ENCODE measurements at regions of chr5 and their contacts with region 1.

Region 1: DNA sequence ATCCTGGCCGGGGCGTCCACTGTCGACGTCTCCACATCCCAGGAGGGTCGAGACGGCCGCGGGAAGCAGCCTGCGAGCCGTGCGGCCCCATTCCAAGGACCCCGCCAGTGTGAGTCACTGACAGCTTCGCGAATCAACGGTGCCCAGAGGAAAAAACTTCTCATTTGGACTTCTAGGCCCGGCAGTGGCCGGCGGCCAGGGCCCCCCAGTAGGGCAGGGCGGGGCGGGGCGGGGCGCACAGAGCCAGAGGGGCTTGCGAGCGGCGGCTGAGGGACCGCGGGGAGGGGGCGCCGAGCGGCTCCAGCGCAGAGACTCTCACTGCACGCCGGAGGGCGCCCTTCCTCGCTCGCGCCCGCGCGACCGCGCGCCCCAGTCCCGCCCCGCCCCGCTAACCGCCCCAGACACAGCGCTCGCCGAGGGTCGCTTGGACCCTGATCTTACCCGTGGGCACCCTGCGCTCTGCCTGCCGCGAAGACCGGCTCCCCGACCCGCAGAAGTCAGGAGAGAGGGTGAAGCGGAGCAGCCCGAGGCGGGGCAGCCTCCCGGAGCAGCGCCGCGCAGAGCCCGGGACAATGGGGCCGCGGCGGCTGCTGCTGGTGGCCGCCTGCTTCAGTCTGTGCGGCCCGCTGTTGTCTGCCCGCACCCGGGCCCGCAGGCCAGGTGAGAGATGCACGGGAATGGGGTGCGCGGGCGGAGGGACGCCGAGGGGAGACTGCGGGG is at the start of gene F2R:
- DNase-seq: peak; percentile 67
- ATAC-seq: peak; percentile 78
- H3K4me3 Mint-ChIP-seq: peak within 1 kb of the TSS; percentile 79
- H3K27ac Mint-ChIP-seq: peak within 1 kb of the TSS; percentile 81
- H3K4me1 Mint-ChIP-seq: peaks cover 49% of the 10 kb centered on the region
- H3K27me3 Mint-ChIP-seq: peaks cover 25% of the 10 kb centered on the region
- total RNA-seq, gene F2R: 7.5 to 7.9 TPM

Region 2: DNA sequence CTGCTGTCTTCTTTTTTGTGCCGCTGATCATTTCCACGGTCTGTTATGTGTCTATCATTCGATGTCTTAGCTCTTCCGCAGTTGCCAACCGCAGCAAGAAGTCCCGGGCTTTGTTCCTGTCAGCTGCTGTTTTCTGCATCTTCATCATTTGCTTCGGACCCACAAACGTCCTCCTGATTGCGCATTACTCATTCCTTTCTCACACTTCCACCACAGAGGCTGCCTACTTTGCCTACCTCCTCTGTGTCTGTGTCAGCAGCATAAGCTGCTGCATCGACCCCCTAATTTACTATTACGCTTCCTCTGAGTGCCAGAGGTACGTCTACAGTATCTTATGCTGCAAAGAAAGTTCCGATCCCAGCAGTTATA is 17.1 kb after region 1 on chr5:
- CTCF ChIA-PET with region 1: interaction called, 35 read pairs
- POLR2A ChIA-PET with region 1: interaction called, 3 read pairs
- DNase-seq: peak; percentile 67
- ATAC-seq: peak; percentile 80
- H3K4me3 Mint-ChIP-seq: peak overlapping the region; percentile 38
- H3K27ac Mint-ChIP-seq: peak overlapping the region; percentile 75
- H3K4me1 Mint-ChIP-seq: peaks cover 31% of the 10 kb centered on the region
- H3K27me3 Mint-ChIP-seq: no peaks in the 10 kb centered on the region